ENCODE measurements at regions of chr18 and their contacts with region 1.

Region 1: DNA sequence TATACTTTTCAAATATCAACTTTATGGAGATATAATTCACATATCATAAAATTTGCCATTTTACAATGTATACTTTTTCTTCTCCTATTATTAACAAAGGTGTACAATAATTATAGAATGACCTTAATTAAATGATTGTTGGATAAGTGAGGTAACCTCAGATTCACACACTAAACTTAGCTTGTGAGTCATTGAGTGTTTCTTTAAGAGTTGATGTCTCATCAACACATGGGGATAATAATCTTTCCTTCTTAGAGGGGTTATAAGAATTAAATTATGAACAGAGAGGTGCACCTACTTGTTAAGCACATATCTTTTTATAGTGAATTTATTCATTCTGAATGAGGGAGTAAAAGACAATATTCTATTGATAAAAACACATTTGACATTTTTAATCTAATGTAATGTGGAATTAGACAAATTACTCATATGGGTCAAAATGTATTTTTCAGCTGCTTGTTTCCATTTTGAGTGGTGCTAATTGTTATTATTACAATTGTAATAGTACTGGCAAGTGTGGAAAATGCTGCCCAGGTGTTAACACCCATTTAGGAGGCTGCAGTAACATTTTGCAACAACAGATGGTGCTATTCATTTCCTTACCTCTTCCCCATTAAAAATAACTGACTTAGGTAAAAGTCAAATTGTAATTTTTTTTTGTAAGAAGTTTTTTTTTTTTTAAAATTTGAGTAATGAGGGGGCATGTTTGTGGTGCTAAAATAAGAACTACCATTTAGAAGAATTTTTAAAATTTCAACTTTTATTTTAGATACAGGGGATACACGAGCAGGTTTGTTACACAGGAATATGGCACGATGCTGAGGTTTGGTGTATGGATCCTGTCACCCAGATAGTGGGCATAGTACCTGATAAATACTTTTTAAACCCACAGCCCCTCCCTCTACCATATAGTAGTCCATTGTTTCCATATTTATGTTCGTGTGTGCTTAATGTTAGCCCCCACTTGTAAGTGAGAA is 32.1 kb upstream of the DYNAP start:
- DNase-seq: no peak
- ATAC-seq: no peak
- H3K4me3 ChIP-seq: no peak overlapping the region
- H3K27ac ChIP-seq: no peak overlapping the region
- H3K4me1 ChIP-seq: no peaks in the 10 kb centered on the region
- H3K27me3 ChIP-seq: no peaks in the 10 kb centered on the region
- CTCF ChIP-seq: peak; percentile 31 to 74 (median 57); a peak in 4 of 6 replicates
- POLR2A ChIP-seq: no peak
- RAD21 ChIP-seq: peak; percentile 52

Region 2: DNA sequence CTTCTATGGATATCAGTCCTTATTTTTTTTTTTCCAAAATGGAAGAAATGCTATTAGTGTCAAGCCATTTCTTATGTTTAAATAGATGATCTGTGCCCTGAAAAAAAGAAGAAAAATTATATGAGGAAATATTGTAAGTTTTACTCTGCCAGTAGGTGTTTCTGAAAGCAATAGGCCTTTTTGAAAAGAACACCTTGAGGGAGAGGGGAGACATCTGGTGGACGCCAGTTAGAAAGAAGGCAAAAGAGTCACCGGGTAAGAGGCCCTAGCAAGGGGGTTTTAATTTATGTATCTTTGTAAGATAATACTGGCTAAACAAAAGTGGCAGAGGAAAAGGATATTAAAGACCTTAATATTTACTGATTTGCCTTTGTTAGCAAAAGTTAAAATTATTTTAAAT is 88.3 kb after region 1 on chr18:
- CTCF ChIA-PET with region 1: interaction called, 3 read pairs
- POLR2A ChIA-PET with region 1: no interaction called
- RAD21 ChIA-PET with region 1: no interaction called
- intact Hi-C with region 1: loop called (anchors 2 kb)
- DNase-seq: peak; percentile 34
- ATAC-seq: peak; percentile 80
- H3K4me3 ChIP-seq: no peak overlapping the region
- H3K27ac ChIP-seq: no peak overlapping the region
- H3K4me1 ChIP-seq: no peaks in the 10 kb centered on the region
- H3K27me3 ChIP-seq: no peaks in the 10 kb centered on the region
- CTCF ChIP-seq: peak; percentile 54 to 67 (median 66)
- POLR2A ChIP-seq: no peak
- RAD21 ChIP-seq: peak; percentile 73

Region 3: DNA sequence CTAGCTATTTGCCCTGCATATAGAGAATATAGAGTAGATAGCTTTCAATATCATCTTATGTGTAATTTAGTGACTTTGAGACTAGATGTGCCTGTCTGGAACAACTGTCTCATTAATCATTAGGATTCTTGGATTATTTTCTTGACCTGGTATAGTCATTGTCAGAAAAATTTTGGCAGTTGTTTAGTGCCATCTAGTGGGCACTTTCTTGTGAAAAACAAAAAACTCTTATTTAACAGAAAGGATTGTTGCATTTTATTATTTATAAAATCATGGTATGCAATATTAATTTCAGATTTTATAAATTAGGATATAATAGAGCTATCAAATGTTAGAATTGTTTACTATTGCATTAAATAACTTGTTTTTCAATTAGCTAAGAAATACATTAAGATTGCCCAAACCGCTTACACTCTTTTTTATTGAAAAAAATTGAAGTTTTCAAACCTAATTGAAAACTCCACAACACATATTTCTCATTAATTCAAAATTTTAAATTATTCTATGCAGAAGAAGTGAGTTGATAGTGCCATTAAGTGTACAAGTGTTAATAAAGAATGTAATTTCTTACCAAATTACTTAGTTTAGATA is 112.5 kb after region 1 on chr18:
- CTCF ChIA-PET with region 1: no interaction called
- POLR2A ChIA-PET with region 1: no interaction called
- RAD21 ChIA-PET with region 1: no interaction called
- intact Hi-C with region 1: loop called (anchors 1 kb)
- DNase-seq: peak; percentile 24
- ATAC-seq: no peak
- H3K4me3 ChIP-seq: no peak overlapping the region
- H3K27ac ChIP-seq: no peak overlapping the region
- H3K4me1 ChIP-seq: no peaks in the 10 kb centered on the region
- H3K27me3 ChIP-seq: no peaks in the 10 kb centered on the region
- CTCF ChIP-seq: peak; percentile 41 to 58 (median 56); a peak in 5 of 6 replicates
- POLR2A ChIP-seq: no peak
- RAD21 ChIP-seq: peak; percentile 75

Region 4: DNA sequence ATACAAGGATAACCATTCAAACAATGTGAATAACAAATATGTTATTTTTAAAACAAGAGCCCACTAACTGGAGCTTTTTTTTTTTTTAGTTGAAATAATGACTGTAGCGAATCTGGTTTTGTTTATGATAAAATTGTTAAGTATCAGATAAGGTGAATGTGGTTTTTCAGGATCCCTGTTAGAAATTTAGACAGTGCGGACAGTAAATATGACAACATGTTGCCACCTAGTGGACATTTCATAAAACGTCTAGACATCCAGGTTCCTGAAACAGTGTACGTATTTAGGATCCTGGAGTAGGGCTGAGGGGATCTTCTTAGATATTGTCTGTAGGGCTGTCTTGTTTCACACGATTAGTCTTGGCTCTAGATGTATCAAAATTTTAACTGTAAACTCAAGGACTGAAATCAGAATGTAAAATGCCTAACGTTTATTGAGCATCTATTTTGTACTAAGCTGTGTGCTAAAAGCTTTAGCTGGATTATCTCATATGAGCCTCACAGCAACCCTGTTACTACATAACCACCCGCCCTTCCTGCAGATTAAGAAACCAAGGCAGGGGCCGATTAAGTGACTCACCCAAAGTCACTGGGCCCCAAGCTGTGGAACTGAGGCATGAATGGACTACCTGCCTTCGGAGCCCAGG is 424.3 kb after region 1 on chr18:
- CTCF ChIA-PET with region 1: no interaction called
- POLR2A ChIA-PET with region 1: no interaction called
- RAD21 ChIA-PET with region 1: no interaction called
- intact Hi-C with region 1: loop called (anchors 1 kb)
- DNase-seq: peak; percentile 47
- ATAC-seq: peak; percentile 96
- H3K4me3 ChIP-seq: no peak overlapping the region
- H3K27ac ChIP-seq: no peak overlapping the region
- H3K4me1 ChIP-seq: peaks cover 0 to 4% of the 10 kb centered on the region in 2 experiments; a peak in 1 of 4 replicates
- H3K27me3 ChIP-seq: no peaks in the 10 kb centered on the region
- CTCF ChIP-seq: peak; percentile 46 to 74 (median 67); a peak in 5 of 6 replicates
- POLR2A ChIP-seq: no peak
- RAD21 ChIP-seq: peak; percentile 86